ENCODE measurements at regions of chr3 and their contacts with region 1.

Region 1: DNA sequence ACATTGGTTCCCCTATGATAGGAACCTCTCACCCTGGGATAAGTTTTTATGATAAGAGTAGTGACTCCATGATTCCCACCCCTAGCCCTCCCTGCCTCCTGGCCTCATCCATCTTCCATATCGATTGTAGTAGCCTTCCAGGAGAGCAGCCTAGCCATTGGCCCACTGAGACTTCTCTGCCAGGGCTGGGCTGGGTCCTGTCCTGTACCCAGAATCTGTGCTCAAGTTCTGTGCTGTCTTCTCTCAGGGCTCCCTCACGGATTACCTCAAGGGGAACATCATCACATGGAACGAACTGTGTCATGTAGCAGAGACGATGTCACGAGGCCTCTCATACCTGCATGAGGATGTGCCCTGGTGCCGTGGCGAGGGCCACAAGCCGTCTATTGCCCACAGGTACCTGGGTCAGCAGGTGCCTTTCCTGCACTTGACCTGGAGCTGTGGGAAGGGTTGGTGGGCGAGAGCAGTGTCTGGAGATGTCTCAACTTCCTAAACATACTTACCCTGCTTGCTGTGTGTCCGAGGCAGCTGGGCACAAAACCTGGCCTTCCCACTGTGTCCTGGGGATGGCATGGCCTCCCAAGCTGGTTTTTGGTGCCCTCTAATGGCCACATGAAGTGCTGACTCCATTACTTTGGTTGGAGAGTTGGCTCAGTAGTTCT is 16.6 kb upstream of the EXOG start:
- DNase-seq: peak; percentile 53
- H3K4me3 ChIP-seq: no peak overlapping the region
- H3K27ac ChIP-seq: no peak overlapping the region
- H3K4me1 ChIP-seq: no peaks in the 10 kb centered on the region
- CTCF ChIP-seq: peak; percentile 92

Region 2: DNA sequence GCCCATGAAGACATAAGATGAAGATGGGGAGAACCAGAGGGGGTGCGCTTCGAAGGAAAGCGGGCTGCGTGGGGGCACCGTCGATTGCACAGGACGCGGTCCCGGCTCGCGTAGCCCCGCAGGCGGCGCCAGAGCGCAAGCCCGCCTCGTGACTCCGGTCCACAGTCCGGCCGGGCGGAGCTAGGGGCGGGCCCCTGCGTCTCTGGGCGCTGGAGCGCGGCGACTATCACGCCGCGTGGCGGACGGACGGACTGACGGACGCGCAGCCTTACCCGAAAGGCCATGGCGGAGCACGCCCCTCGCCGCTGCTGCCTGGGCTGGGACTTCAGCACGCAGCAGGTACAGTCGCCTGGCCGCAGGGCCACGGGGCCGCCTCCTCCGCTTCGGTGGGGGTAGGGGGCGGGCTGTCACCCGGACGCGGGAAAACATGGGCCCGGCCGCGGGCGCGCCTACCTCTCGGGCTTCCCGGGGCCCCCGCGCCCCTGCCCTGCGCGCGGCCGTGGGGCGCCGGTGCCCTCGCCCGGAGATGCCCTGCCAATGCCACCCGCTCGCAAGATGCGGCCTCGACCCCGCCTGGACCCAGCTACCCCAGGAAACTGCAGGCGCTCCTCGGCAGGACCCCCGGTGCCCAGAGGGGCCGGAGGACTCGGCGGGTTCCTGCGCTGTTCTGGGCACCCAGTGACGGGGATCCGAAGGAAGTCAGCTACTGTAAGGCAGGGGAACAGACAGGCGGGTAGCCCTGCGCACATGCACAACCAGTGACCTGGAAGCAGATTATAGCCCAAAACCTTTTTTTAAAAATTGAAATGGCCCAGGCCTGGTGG is 132.8 kb before region 1 on chr3 and contains the start of gene XYLB:
- CTCF ChIA-PET with region 1: no interaction called
- POLR2A ChIA-PET with region 1: no interaction called
- intact Hi-C with region 1: loop called (anchors 1 kb)
- DNase-seq: peak; percentile 86
- H3K4me3 ChIP-seq: peak within 1 kb of the TSS; percentile 70
- H3K27ac ChIP-seq: no peak within 1 kb of the TSS
- H3K4me1 ChIP-seq: peaks cover 10% of the 10 kb centered on the region
- CTCF ChIP-seq: peak; percentile 75
- total RNA-seq, gene XYLB: 7.0 and 7.2 TPM in 2 replicates

Measured in OCI-LY7 (cell line).